ENCODE measurements at regions of chr6 and their contacts with region 1.

Region 1: DNA sequence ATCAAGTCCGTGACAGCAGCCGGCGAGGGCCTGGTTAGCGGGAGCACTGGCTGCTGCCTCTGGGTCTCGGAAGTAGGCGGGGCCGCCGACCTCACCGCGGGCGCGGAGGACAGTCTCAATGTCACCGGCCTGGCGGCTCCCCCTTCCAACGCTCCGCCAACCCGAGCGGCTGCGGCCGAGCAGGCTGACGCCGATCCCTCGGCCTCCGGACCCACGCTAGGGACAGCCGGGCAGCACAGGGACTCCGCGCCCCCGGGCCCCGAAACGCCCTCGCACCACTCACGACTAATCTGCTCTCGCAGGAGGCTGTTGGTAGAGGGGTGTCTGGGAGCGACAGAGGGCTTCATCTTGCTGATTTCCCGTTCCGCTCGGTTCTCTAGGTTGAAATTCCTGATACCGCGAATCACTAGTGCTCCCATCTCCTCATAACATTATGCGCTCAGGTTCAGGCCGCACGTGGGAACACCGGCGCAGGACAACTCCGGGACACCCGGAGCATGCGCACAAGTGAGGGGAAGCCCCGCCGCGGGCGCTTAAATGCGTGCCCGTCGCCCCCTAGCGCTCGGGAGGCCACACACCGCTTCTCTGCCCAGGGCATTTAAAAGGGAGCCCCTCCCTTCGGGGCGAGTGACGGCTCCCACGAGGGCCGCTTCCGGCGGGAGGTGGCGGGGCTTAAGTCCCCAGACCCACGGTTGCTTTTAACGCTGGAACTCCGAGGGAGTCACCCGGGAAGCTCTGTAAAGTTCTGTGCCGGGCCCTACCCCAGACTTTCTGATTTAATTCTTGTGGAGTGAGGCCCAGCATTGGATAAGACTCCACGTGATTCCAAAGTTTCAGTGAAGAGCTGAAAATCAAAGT is at the start of gene NDUFAF4:
- DNase-seq: peak; percentile 81
- H3K4me3 ChIP-seq: peak within 1 kb of the TSS; percentile 90
- H3K27ac ChIP-seq: peak within 1 kb of the TSS; percentile 80
- H3K27me3 ChIP-seq: no peaks in the 10 kb centered on the region
- CTCF ChIP-seq: peak; percentile 91
- polyA plus RNA-seq, gene NDUFAF4: 23.6 and 32.5 TPM in 2 replicates

Region 2: GRCh38 chr6:96089173-96089572 is 808.4 kb before region 1 on chr6:
- CTCF ChIA-PET with region 1: no interaction called
- POLR2A ChIA-PET with region 1: no interaction called
- DNase-seq: no peak
- H3K4me3 ChIP-seq: no peak overlapping the region
- H3K27ac ChIP-seq: no peak overlapping the region
- H3K27me3 ChIP-seq: no peaks in the 10 kb centered on the region
- CTCF ChIP-seq: no peak

Region 3: GRCh38 chr6:96626759-96627364 is 270.8 kb before region 1 on chr6:
- CTCF ChIA-PET with region 1: interaction called, 93 read pairs
- POLR2A ChIA-PET with region 1: no interaction called
- DNase-seq: peak; percentile 1
- H3K4me3 ChIP-seq: no peak overlapping the region
- H3K27ac ChIP-seq: no peak overlapping the region
- H3K27me3 ChIP-seq: no peaks in the 10 kb centered on the region
- CTCF ChIP-seq: peak; percentile 38

Region 4: DNA sequence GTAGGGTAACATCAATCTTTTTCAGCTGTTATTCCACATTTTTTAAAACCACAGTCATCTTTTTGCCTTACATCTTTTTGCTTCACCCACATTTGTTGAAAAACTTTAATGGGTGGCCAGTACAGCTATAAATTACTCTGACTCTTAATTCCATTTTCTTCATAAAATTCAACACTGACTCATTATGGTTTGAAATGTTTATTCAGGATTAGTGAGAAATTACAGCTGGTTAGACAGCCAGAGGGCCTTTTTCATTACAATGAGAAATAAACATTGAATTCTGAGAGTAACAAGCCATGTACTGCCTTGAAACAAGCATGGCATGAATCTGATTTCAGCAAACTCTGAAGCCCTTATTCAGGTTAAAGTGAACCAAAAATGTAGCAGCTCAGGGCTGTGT is 19.5 kb before region 1 on chr6:
- CTCF ChIA-PET with region 1: interaction called, 43 read pairs
- POLR2A ChIA-PET with region 1: interaction called, 3 read pairs
- DNase-seq: peak; percentile 23
- H3K4me3 ChIP-seq: no peak overlapping the region
- H3K27ac ChIP-seq: no peak overlapping the region
- H3K27me3 ChIP-seq: peaks cover 5% of the 10 kb centered on the region
- CTCF ChIP-seq: no peak

Region 5: DNA sequence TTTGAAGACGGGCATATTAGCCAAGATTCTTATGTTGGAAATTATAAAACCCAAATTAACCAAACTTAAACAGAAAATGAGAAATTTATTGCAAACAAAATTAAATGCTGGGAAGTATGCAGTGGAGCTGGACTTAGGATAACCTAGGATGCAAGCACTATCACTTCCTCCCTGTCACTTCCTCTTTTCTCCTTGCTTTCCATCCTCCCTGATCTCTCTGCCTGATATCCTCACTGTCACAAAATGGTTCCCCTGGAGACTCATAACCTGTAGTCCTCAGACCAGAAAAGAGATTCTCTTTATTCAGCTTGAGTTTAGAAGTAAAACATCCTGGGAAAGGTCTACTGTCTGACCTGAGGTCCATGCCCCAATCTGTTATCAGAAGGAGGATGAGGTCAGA is 19.5 kb after region 1 on chr6:
- CTCF ChIA-PET with region 1: interaction called, 22 read pairs
- POLR2A ChIA-PET with region 1: no interaction called
- DNase-seq: no peak
- H3K4me3 ChIP-seq: no peak overlapping the region
- H3K27ac ChIP-seq: no peak overlapping the region
- H3K27me3 ChIP-seq: peaks cover 12% of the 10 kb centered on the region
- CTCF ChIP-seq: no peak

Region 6: GRCh38 chr6:97038437-97038836 is 140.8 kb after region 1 on chr6:
- CTCF ChIA-PET with region 1: interaction called, 10 read pairs
- POLR2A ChIA-PET with region 1: no interaction called
- DNase-seq: no peak
- H3K4me3 ChIP-seq: no peak overlapping the region
- H3K27ac ChIP-seq: no peak overlapping the region
- H3K27me3 ChIP-seq: no peaks in the 10 kb centered on the region
- CTCF ChIP-seq: no peak

Measured in AG04450 (cell line).